Caco-2 (cell line): ENCODE measurements at regions of chr12 and their contacts with region 1.

Region 1: DNA sequence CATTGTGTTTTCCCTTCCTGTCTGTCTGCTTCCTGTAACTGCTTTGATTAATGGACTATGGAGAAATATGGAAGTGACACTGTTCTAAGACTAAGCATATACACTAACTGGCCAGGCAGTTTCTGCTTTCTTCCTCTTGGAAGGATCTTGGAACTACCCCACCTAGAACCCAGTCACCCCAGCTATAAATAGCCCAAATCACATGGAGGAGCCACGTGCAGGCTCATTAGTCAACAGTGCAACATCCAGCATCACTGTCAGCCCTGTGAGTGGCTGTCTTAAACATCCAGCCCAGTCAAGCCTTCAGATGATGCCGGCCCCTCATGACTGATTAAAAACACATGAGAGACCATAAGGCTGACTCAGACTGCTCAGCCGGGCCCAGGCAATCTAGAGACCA is 39.2 kb downstream of the BCAT1 start:
- DNase-seq: no peak
- H3K4me3 ChIP-seq: no peak overlapping the region
- H3K4me3 Mint-ChIP-seq: peak overlapping the region; percentile 7
- H3K27ac Mint-ChIP-seq: peak overlapping the region; percentile 63
- H3K4me1 ChIP-seq: peaks cover 50% of the 10 kb centered on the region
- H3K4me1 Mint-ChIP-seq: peaks cover 29% of the 10 kb centered on the region
- H3K27me3 ChIP-seq: no peaks in the 10 kb centered on the region
- H3K27me3 Mint-ChIP-seq: no peaks in the 10 kb centered on the region
- CTCF ChIP-seq: no peak

Region 2: DNA sequence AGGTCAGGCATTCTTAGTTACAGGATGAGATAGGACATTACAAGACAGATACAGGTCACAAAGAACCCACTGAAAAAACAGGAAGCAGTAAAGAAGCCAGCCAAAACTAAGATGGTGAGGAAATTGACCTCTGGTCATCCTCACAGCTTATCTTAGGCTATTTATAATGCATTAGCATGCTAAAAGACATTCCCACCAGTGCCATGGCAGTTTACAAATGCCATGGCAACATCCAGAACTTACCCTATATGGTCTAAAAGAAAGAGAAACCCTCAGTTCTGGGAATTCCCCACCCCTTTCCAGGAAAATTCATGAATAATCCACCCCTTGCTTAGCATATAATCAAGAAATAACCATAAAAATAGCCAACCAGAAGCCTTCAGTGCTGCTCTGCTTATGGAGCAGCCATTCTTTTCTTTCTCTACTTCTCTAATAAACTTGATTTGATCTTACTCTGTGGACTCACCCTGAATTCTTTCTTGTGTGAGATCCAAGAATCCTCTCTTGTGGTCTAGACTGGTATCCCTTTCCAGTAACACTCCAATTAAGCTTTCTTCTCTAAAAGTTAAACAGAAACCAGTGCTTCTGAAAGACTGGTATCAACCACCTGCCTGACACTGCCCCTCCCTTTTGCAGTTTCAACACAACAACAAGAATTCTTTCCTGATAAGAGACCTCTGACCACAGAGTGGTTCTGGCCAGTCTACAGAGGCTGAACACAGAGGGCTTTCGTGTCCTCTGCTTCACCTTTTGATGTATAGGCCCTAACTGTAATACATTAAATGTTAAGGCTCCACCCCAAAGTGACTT is 47.7 kb before region 1 on chr12:
- CTCF ChIA-PET with region 1: no interaction called
- POLR2A ChIA-PET with region 1: no interaction called
- intact Hi-C with region 1: loop called (anchors 1 kb)
- DNase-seq: peak; percentile 88 to 89
- H3K4me3 ChIP-seq: no peak overlapping the region
- H3K4me3 Mint-ChIP-seq: peak overlapping the region; percentile 57
- H3K27ac Mint-ChIP-seq: peak overlapping the region; percentile 94
- H3K4me1 ChIP-seq: peaks cover 67% of the 10 kb centered on the region
- H3K4me1 Mint-ChIP-seq: peaks cover 39% of the 10 kb centered on the region
- H3K27me3 ChIP-seq: no peaks in the 10 kb centered on the region
- H3K27me3 Mint-ChIP-seq: no peaks in the 10 kb centered on the region
- CTCF ChIP-seq: no peak

Region 3: DNA sequence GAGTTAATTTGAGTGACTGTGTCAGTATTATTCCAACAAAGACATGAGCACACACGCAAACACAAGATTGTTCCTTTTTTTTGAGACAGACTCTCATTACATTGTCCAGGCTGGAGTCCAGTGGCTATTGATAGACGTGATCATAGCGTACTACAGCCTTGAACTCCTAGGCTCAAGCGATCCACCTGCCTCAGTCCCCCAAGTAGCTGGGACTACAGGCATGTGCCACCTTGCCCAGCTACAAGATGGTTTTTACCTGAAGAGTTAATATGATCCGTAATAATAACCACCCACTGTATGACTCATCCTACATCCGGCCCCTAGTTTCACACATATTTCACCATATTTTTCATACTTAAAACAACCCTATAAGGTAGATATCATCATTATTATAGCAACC is 12.4 kb after region 1 on chr12:
- CTCF ChIA-PET with region 1: no interaction called
- POLR2A ChIA-PET with region 1: no interaction called
- intact Hi-C with region 1: loop called (anchors 2 kb)
- DNase-seq: no peak
- H3K4me3 ChIP-seq: no peak overlapping the region
- H3K4me3 Mint-ChIP-seq: no peak overlapping the region
- H3K27ac Mint-ChIP-seq: peak overlapping the region; percentile 37
- H3K4me1 ChIP-seq: peaks cover 33% of the 10 kb centered on the region
- H3K4me1 Mint-ChIP-seq: peaks cover 33% of the 10 kb centered on the region
- H3K27me3 ChIP-seq: no peaks in the 10 kb centered on the region
- H3K27me3 Mint-ChIP-seq: no peaks in the 10 kb centered on the region
- CTCF ChIP-seq: no peak

Region 4: DNA sequence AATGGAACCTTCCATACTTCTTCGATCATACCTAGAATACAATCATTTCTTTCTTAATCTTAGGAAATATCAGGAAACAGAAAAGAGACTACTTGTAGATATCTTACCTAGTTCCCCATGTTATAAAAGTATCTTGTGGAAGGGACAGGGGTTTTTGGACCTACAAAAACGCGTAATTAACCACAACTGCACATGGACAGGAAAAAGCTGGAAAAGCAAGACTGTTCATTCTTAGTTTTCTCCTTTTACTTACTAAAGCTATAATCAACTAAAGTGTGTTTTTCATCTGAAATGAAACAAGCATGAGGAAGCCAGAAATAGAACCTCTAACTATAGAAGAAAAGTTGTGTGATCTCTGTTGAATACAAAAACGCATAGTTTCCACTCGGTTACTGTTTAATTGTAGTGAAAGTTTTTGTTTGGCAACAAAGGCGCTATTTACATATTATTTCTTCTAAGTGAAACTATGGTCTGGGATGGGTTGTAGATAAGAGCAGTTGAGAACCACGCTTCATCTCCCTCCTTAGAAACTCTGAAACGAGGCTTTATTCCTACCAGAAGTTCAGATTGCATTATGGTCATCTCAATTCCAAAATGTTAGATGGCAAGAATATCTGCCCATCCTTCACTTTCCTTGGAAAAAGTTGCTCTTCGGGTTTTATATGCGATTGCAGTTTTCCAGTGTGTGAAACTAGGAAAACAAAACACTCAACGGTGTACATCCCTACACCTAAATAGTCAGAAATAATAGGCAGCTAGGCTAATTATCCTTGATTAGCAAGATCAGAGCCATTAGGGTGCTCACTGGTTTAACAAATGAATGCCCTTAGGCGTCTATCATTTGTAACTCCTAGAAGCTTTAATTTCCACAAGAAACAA is 38.1 kb after region 1 on chr12:
- CTCF ChIA-PET with region 1: no interaction called
- POLR2A ChIA-PET with region 1: interaction called, 4 read pairs
- intact Hi-C with region 1: loop called (anchors 1 kb)
- DNase-seq: no peak
- H3K4me3 ChIP-seq: peak overlapping the region; percentile 59
- H3K4me3 Mint-ChIP-seq: peak overlapping the region; percentile 81
- H3K27ac Mint-ChIP-seq: peak overlapping the region; percentile 99
- H3K4me1 ChIP-seq: peaks cover 27% of the 10 kb centered on the region
- H3K4me1 Mint-ChIP-seq: peaks cover 28% of the 10 kb centered on the region
- H3K27me3 ChIP-seq: no peaks in the 10 kb centered on the region
- H3K27me3 Mint-ChIP-seq: no peaks in the 10 kb centered on the region
- CTCF ChIP-seq: no peak